GM12878 (cell line): ENCODE measurements at regions of chr2 and their contacts with region 1.

Region 1: DNA sequence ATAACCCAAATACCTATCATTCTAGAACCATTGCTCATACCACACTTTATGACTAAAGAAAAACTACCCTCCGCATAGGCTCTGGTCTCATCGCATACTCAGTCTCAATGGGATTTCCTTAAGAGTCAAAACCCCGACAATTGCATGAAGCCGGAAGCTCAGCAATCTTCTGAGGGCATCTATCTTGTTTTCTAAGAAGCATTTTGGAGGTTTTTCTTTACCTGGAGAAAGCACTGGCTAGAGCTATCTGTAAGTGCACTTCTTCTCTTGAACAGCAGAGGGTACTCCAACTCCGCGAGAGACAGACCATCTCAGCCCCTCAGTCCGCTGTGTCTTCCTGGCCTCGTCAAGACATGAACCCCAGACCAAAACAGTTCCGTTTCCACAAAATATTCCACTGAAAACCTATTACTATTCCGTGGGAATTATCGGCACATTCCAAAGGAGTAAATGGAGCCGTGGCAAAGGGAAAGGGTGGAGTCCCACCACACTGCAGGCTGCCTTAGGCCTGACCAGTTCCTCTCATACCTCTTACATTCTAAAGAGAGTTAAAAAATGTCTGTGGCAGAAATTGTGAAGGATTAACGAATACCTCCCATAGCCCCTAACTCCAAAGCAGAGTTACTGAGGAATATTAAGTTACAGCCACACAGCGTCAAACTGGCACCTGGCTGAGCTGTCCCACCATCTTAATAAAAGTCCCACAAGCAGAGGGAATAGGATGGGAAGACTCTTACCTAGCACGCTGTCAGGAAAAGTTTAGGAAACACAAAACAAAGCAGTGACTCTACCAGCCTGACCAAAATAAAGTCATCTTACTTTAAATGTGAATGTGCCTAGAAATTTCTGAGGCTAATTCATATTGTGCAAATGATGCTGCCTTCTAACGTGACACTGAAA is 325.6 kb upstream of the VRK2 start:
- DNase-seq: peak; percentile 47
- ATAC-seq: peak; percentile 99
- H3K4me3 ChIP-seq: no peak overlapping the region
- H3K27ac ChIP-seq: no peak overlapping the region
- H3K4me1 ChIP-seq: no peaks in the 10 kb centered on the region
- H3K27me3 ChIP-seq: no peaks in the 10 kb centered on the region
- CTCF ChIP-seq: peak; percentile 91
- EP300 ChIP-seq: no peak
- POLR2A ChIP-seq: no peak
- RAD21 ChIP-seq: peak; percentile 93

Region 2: GRCh38 chr2:57549642-57550102 is 171.3 kb before region 1 on chr2:
- CTCF ChIA-PET with region 1: interaction called, 7 read pairs
- POLR2A ChIA-PET with region 1: no interaction called
- RAD21 ChIA-PET with region 1: interaction called, 4 read pairs
- SMC1A ChIA-PET with region 1: interaction called, 3 read pairs
- in situ Hi-C with region 1: no loop called
- intact Hi-C with region 1: loop called (anchors 5 kb)
- DNase-seq: peak; percentile 20
- ATAC-seq: peak; percentile 87
- H3K4me3 ChIP-seq: no peak overlapping the region
- H3K27ac ChIP-seq: no peak overlapping the region
- H3K4me1 ChIP-seq: no peaks in the 10 kb centered on the region
- H3K27me3 ChIP-seq: no peaks in the 10 kb centered on the region
- CTCF ChIP-seq: peak; percentile 38 to 57 (median 53); a peak in 5 of 6 replicates
- EP300 ChIP-seq: no peak
- POLR2A ChIP-seq: no peak
- RAD21 ChIP-seq: peak; percentile 61

Region 3: DNA sequence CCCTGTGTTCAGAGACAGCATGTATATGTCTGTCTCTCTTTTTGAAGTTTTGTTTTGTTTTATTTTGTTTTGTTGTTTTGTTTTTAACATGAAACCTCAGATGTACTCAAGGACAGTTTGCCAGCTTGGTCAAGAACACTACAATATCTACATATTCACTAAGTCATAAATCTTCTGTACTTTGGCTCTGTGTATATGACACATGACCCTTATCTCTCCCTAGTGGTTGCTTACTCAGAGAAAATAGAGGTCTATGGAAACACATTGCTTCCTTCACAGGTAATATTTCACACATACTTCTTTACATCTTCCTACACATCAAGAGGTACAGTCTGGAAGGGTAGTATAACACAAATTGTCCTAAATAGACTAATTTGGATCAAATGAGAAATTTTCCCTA is 13.0 kb after region 1 on chr2:
- CTCF ChIA-PET with region 1: interaction called, 11 read pairs
- POLR2A ChIA-PET with region 1: no interaction called
- RAD21 ChIA-PET with region 1: no interaction called
- SMC1A ChIA-PET with region 1: interaction called, 6 read pairs
- in situ Hi-C with region 1: no loop called
- intact Hi-C with region 1: no loop called
- DNase-seq: no peak
- ATAC-seq: no peak
- H3K4me3 ChIP-seq: no peak overlapping the region
- H3K27ac ChIP-seq: no peak overlapping the region
- H3K4me1 ChIP-seq: no peaks in the 10 kb centered on the region
- H3K27me3 ChIP-seq: no peaks in the 10 kb centered on the region
- CTCF ChIP-seq: no peak
- EP300 ChIP-seq: no peak
- POLR2A ChIP-seq: no peak
- RAD21 ChIP-seq: no peak

Region 4: GRCh38 chr2:58448065-58448507 is 727.1 kb after region 1 on chr2:
- CTCF ChIA-PET with region 1: interaction called, 8 read pairs
- POLR2A ChIA-PET with region 1: no interaction called
- RAD21 ChIA-PET with region 1: interaction called, 5 read pairs
- SMC1A ChIA-PET with region 1: interaction called, 10 read pairs
- in situ Hi-C with region 1: no loop called
- intact Hi-C with region 1: loop called (anchors 1 kb)
- DNase-seq: peak; percentile 46
- ATAC-seq: peak; percentile 67
- H3K4me3 ChIP-seq: no peak overlapping the region
- H3K27ac ChIP-seq: no peak overlapping the region
- H3K4me1 ChIP-seq: no peaks in the 10 kb centered on the region
- H3K27me3 ChIP-seq: no peaks in the 10 kb centered on the region
- CTCF ChIP-seq: peak; percentile 50 to 77 (median 57); a peak in 5 of 6 replicates
- EP300 ChIP-seq: no peak
- POLR2A ChIP-seq: no peak
- RAD21 ChIP-seq: peak; percentile 68

Region 5: DNA sequence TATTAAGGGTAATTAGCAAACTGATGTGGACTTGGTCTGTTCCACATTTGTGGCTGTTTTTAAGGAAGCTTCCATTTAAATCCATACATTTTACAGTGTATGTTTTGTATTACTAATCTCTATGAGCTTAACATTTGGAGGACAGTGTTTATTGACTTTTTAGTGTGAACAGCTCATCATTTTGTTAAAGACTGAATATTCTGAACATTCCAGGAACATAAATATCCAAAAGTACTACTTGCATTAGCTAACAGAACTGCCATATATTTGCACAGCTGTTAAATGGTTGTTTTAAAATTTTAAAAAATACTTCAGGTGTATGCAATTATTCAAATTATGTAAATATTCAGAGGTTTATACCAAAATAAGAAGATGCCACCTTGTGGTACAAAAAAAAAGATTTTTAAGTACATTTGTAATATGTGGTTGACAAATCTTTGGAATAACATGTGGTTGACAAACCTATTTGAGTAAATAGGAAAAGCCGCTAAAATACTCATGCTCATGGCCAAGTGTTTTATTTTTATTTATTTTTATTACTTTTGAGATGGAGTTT is 959.9 kb after region 1 on chr2:
- CTCF ChIA-PET with region 1: interaction called, 4 read pairs
- POLR2A ChIA-PET with region 1: no interaction called
- RAD21 ChIA-PET with region 1: no interaction called
- SMC1A ChIA-PET with region 1: no interaction called
- in situ Hi-C with region 1: no loop called
- intact Hi-C with region 1: loop called (anchors 5 kb)
- DNase-seq: no peak
- ATAC-seq: no peak
- H3K4me3 ChIP-seq: no peak overlapping the region
- H3K27ac ChIP-seq: no peak overlapping the region
- H3K4me1 ChIP-seq: no peaks in the 10 kb centered on the region
- H3K27me3 ChIP-seq: no peaks in the 10 kb centered on the region
- CTCF ChIP-seq: no peak
- EP300 ChIP-seq: no peak
- POLR2A ChIP-seq: no peak
- RAD21 ChIP-seq: no peak

Region 6: GRCh38 chr2:58871469-58872142 is 1150.6 kb after region 1 on chr2:
- CTCF ChIA-PET with region 1: interaction called, 3 read pairs
- POLR2A ChIA-PET with region 1: no interaction called
- RAD21 ChIA-PET with region 1: no interaction called
- SMC1A ChIA-PET with region 1: interaction called, 5 read pairs
- in situ Hi-C with region 1: no loop called
- intact Hi-C with region 1: loop called (anchors 10 kb)
- DNase-seq: no peak
- ATAC-seq: peak; percentile 73
- H3K4me3 ChIP-seq: no peak overlapping the region
- H3K27ac ChIP-seq: no peak overlapping the region
- H3K4me1 ChIP-seq: no peaks in the 10 kb centered on the region
- H3K27me3 ChIP-seq: no peaks in the 10 kb centered on the region
- CTCF ChIP-seq: peak; percentile 10 to 29 (median 21); a peak in 3 of 6 replicates
- EP300 ChIP-seq: no peak
- POLR2A ChIP-seq: no peak
- RAD21 ChIP-seq: peak; percentile 48